Endothelial cell of umbilical vein (primary cell): ENCODE measurements at regions of chr10 and their contacts with region 1.

Region 1: GRCh38 chr10:104054430-104054829 is 31.2 kb downstream of the COL17A1 start:
- DNase-seq: peak; percentile 30
- H3K4me3 ChIP-seq: no peak overlapping the region
- H3K27ac ChIP-seq: peak overlapping the region; percentile 64
- H3K4me1 ChIP-seq: peaks cover 43% of the 10 kb centered on the region
- H3K27me3 ChIP-seq: no peaks in the 10 kb centered on the region
- CTCF ChIP-seq: no peak
- POLR2A ChIP-seq: no peak

Region 2: DNA sequence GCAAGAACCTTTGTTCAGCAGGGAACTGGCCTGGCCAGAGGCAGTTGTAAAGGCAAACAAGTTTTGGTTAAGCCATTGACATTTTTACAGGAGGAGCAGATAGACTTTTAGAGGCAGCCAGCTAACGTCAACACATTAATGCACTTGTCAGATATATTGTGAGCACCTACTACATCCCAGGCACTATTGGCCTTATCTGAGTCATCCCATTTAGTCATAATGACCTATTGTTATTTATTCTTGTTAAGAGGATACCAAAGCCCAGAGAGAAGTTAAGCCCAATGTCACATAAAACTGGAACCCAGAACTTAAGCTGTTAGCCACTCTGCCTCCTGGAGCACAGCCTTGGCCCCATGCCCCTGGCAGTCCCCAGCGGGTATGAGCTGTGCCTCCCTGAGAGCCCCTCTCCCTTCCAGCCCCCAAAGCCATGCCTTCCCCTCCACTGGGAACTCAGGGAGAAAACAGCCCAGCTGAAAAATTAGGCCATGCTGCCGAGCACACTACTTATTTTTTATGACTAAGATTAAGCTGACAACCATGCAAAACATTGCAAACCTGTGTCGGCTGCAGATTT is 1442.8 kb before region 1 on chr10:
- CTCF ChIA-PET with region 1: no interaction called
- POLR2A ChIA-PET with region 1: no interaction called
- dilution Hi-C with region 1: no loop called
- intact Hi-C with region 1: no loop called
- DNase-seq: peak; percentile 73
- H3K4me3 ChIP-seq: no peak overlapping the region
- H3K27ac ChIP-seq: peak overlapping the region; percentile 68
- H3K4me1 ChIP-seq: peaks cover 44% of the 10 kb centered on the region
- H3K27me3 ChIP-seq: no peaks in the 10 kb centered on the region
- CTCF ChIP-seq: no peak
- POLR2A ChIP-seq: peak; percentile 13

Region 3: GRCh38 chr10:104038958-104039752 is 15.3 kb before region 1 on chr10:
- CTCF ChIA-PET with region 1: no interaction called
- POLR2A ChIA-PET with region 1: no interaction called
- dilution Hi-C with region 1: no loop called
- intact Hi-C with region 1: no loop called
- DNase-seq: no peak
- H3K4me3 ChIP-seq: no peak overlapping the region
- H3K27ac ChIP-seq: no peak overlapping the region
- H3K4me1 ChIP-seq: no peaks in the 10 kb centered on the region
- H3K27me3 ChIP-seq: no peaks in the 10 kb centered on the region
- CTCF ChIP-seq: no peak
- POLR2A ChIP-seq: no peak

Region 4: DNA sequence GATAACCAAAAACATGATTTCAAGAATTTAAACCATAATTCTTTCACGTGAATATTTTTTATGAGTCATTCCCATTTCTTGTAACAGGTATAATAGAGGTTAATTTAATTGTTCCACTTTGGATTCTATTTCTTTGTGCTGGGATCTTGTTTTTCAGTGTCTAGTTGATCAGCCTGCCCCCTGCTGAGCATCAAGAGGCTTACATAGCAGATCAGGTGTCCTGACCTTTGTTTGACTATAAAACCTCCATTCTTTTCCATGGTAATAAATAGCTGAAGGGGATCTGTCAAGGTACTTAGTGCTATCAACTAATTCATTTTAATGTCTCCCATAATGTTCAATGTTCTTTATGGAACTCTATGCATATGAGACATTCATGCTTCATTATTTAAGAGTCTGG is 26.3 kb after region 1 on chr10:
- CTCF ChIA-PET with region 1: interaction called, 6 read pairs
- POLR2A ChIA-PET with region 1: no interaction called
- dilution Hi-C with region 1: no loop called
- intact Hi-C with region 1: loop called (anchors 1 kb)
- DNase-seq: peak; percentile 45
- H3K4me3 ChIP-seq: no peak overlapping the region
- H3K27ac ChIP-seq: no peak overlapping the region
- H3K4me1 ChIP-seq: peaks cover 18% of the 10 kb centered on the region
- H3K27me3 ChIP-seq: no peaks in the 10 kb centered on the region
- CTCF ChIP-seq: peak; percentile 46 to 49
- POLR2A ChIP-seq: no peak

Region 5: GRCh38 chr10:105017116-105017515 is 962.7 kb after region 1 on chr10:
- CTCF ChIA-PET with region 1: no interaction called
- POLR2A ChIA-PET with region 1: no interaction called
- dilution Hi-C with region 1: no loop called
- intact Hi-C with region 1: no loop called
- DNase-seq: no peak
- H3K4me3 ChIP-seq: no peak overlapping the region
- H3K27ac ChIP-seq: no peak overlapping the region
- H3K4me1 ChIP-seq: no peaks in the 10 kb centered on the region
- H3K27me3 ChIP-seq: no peaks in the 10 kb centered on the region
- CTCF ChIP-seq: no peak
- POLR2A ChIP-seq: no peak